ENCODE measurements at regions of chr4 and their contacts with region 1.

Region 1: GRCh38 chr4:78661921-78662521 is 110.5 kb downstream of the ANXA3 start:
- DNase-seq: no peak
- H3K4me3 ChIP-seq: no peak overlapping the region
- H3K27ac ChIP-seq: no peak overlapping the region
- H3K4me1 ChIP-seq: peaks cover 3% of the 10 kb centered on the region
- H3K27me3 ChIP-seq: no peaks in the 10 kb centered on the region
- CTCF ChIP-seq: no peak

Region 2: DNA sequence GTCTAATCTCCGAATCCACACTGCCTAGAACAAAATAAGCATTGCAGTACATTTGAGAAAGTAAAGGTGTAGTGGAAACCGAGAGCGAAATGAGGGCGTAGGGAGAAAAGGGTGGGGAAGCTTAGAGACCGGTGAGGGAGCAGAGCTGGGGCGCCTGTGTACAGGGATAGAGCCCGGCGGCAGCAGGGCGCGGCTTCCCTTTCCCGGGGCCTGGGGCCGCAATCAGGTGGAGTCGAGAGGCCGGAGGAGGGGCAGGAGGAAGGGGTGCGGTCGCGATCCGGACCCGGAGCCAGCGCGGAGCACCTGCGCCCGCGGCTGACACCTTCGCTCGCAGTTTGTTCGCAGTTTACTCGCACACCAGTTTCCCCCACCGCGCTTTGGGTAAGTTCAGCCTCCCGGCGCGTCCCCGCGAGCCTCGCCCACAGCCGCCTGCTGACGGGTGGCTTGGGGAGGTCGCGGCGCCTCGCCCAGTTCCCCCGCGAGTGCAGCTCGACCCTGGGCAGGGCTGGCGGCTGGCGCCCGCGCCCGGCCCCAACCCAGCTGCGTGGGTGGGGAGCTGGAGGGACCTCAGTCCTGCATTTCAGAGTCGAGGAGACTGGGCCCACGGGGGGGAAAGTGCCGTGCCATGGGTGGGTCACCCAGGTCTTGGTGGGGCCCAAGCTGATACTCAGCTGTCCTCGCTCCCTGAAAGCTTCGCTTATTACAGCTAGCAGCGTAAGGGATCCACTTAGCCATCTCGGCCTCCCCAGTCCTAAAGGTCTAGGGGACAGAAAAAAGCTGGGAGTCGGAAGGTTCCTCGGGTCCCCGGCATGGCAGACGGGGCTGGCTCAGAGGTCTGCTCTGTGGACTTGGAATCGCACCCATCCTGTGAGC is 110.3 kb before region 1 on chr4 and contains the start of gene ANXA3:
- CTCF ChIA-PET with region 1: no interaction called
- dilution Hi-C with region 1: no loop called
- in situ Hi-C with region 1: no loop called
- intact Hi-C with region 1: no loop called
- DNase-seq: peak; percentile 70
- H3K4me3 ChIP-seq: peak within 1 kb of the TSS; percentile 76 to 97 (median 82)
- H3K27ac ChIP-seq: peak within 1 kb of the TSS; percentile 100
- H3K4me1 ChIP-seq: peaks cover 39% of the 10 kb centered on the region
- H3K27me3 ChIP-seq: no peaks in the 10 kb centered on the region
- CTCF ChIP-seq: peak in 1 of 2 donors; percentile 0
- total RNA-seq, gene ANXA3: 325 to 422 TPM

Region 3: DNA sequence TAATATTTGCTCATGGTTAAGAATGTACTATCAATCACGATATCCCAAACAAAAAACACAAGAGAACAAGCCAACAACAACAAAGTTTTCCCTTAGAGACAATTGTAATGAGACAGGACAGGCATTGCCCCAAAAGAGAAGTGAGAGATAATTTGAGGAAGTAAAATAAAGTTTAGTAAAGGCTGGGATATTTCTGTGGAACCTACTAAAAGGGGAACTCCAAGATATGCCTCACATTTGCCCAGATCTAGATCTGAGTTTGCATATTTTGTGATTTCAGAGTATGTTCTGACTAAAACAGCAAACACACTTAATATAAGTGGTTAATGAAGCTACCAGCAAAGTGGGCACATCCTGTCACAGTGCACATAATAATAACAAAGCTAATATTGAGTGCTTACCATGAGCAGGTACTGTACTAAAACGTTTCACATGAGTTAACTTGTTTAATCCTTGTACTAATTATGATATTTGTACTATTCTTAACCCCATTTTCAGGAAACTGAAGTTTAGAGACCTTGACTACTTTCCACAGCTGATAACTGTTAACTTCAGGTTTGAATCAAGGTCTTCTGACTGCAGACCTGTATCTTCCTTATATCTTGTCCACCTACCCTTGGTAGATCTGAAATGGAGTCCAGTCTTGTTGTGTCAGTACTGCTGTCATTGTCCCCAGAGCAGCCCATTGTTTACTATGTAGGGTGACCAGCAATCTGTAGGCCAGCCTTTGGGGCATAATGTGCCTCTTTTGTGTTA is 88.1 kb after region 1 on chr4:
- CTCF ChIA-PET with region 1: no interaction called
- dilution Hi-C with region 1: no loop called
- in situ Hi-C with region 1: no loop called
- intact Hi-C with region 1: loop called (anchors 5 kb)
- DNase-seq: no peak
- H3K4me3 ChIP-seq: no peak overlapping the region
- H3K27ac ChIP-seq: no peak overlapping the region
- H3K4me1 ChIP-seq: no peaks in the 10 kb centered on the region
- H3K27me3 ChIP-seq: no peaks in the 10 kb centered on the region
- CTCF ChIP-seq: no peak